PC-9 (cell line): ENCODE measurements at regions of chr12 and their contacts with region 1.

Region 1: DNA sequence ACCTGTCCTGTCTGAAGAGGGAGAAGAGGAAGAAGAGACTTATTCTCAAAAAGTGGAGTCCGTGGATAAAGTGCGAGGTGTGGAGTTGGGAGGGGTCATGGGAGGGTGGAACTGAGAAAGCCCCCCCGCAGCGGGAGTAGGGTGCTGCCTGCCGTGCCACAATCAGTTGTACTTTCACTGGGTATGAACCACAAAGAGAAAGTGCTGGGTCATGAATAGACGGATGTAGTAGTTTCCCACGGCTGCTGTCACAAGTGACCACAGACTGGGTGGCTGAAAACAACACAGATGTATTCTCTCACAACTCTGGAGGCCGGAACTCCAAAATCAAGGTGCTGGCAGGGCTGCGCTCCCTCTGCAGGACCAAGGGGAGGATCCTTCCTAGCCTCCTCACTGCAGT is 5.5 kb downstream of the DNAH10 start:
- DNase-seq: no peak
- H3K4me3 ChIP-seq: no peak overlapping the region
- H3K27ac ChIP-seq: no peak overlapping the region
- H3K4me1 ChIP-seq: no peaks in the 10 kb centered on the region
- H3K27me3 ChIP-seq: peaks cover 16% of the 10 kb centered on the region
- CTCF ChIP-seq: no peak

Region 2: DNA sequence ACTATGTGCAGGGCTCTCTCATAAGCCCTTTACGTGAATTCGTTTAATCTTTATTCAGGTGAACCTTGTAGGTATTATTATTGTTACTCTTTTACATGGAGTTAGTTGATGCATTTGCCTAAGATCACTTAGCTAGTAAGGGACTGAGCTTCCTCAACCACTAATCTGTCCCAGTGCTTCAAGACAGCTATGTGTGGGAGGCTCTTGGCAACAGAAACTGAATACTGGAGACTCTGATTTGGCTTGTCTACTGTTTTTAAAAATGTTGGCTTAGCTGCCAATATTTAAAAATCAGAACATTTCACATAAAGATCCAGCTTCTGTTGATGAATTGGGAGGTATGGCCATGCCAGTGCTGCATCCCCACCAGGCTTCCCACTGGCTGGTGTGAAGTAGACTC is 1233.8 kb before region 1 on chr12:
- CTCF ChIA-PET with region 1: no interaction called
- POLR2A ChIA-PET with region 1: interaction called, 24 read pairs
- intact Hi-C with region 1: no loop called
- DNase-seq: no peak
- H3K4me3 ChIP-seq: no peak overlapping the region
- H3K27ac ChIP-seq: no peak overlapping the region
- H3K4me1 ChIP-seq: no peaks in the 10 kb centered on the region
- H3K27me3 ChIP-seq: no peaks in the 10 kb centered on the region
- CTCF ChIP-seq: no peak

Region 3: DNA sequence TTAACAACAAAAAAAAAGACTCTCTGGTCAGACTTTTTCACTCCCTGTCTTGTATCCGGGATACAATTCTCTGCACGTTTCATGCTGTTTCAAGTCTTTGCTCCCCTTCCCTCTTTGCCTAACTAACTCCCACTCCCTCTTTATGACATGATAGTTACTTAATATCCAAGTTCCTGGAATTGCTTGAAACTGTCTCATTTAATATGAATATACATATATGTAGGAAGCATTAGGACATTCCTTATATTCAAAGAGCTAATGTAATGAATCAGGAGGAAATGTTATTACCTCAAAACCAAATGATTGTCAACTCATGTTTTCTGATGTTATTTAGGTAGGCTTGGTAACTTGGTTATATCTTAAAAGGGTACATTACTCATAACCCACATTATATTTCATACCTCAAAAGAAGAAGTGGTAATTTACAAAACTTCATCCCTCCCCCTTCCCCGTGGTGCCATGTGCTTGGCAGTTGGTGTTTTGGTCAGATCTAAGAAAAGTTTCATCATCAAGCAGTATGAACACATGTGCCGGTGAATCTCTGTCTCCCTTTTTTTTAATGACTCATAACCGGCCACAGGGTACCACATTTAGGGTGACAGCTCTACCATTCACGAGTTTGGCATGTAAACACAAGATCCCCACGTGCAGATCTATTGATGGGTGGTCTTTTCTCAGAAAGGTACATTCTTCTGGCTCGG is 1120.9 kb before region 1 on chr12:
- CTCF ChIA-PET with region 1: no interaction called
- POLR2A ChIA-PET with region 1: no interaction called
- intact Hi-C with region 1: no loop called
- DNase-seq: no peak
- H3K4me3 ChIP-seq: no peak overlapping the region
- H3K27ac ChIP-seq: no peak overlapping the region
- H3K4me1 ChIP-seq: no peaks in the 10 kb centered on the region
- H3K27me3 ChIP-seq: no peaks in the 10 kb centered on the region
- CTCF ChIP-seq: no peak

Region 4: GRCh38 chr12:123163227-123163626 is 604.4 kb before region 1 on chr12:
- CTCF ChIA-PET with region 1: no interaction called
- POLR2A ChIA-PET with region 1: no interaction called
- intact Hi-C with region 1: no loop called
- DNase-seq: peak in 1 of 2 experiments; percentile 96
- H3K4me3 ChIP-seq: no peak overlapping the region
- H3K27ac ChIP-seq: peak overlapping the region; percentile 72
- H3K4me1 ChIP-seq: peaks cover 23% of the 10 kb centered on the region
- H3K27me3 ChIP-seq: no peaks in the 10 kb centered on the region
- CTCF ChIP-seq: no peak

Region 5: GRCh38 chr12:123250484-123251383 is 516.9 kb before region 1 on chr12:
- CTCF ChIA-PET with region 1: no interaction called
- POLR2A ChIA-PET with region 1: no interaction called
- intact Hi-C with region 1: no loop called
- DNase-seq: peak; percentile 93 to 94
- H3K4me3 ChIP-seq: peak overlapping the region; percentile 37; the same call in 1 of the 2 replicates
- H3K27ac ChIP-seq: peak overlapping the region; percentile 94
- H3K4me1 ChIP-seq: peaks cover 33% of the 10 kb centered on the region
- H3K27me3 ChIP-seq: no peaks in the 10 kb centered on the region
- CTCF ChIP-seq: no peak